ENCODE measurements at regions of chr1 and their contacts with region 1.

Region 1: GRCh38 chr1:93447516-93448291 is at the start of gene FNBP1L:
- DNase-seq: peak; percentile 90 to 92 (median 92)
- ATAC-seq: peak; percentile 96
- H3K4me3 ChIP-seq: peak within 1 kb of the TSS; percentile 89
- H3K27ac ChIP-seq: peak within 1 kb of the TSS; percentile 77
- H3K4me1 ChIP-seq: peaks cover 14 to 18% of the 10 kb centered on the region in 2 experiments; a peak in 4 of 5 replicates
- H3K27me3 ChIP-seq: 0 out of 5 replicates have a peak, but pooled peaks cover 0 to 4% of the 10 kb centered on the region in 2 experiments
- CTCF ChIP-seq: no peak
- EP300 ChIP-seq: no peak
- POLR2A ChIP-seq: peak; percentile 65
- RAD21 ChIP-seq: no peak
- polyA plus RNA-seq, gene FNBP1L: 1.4 to 2.3 TPM

Region 2: DNA sequence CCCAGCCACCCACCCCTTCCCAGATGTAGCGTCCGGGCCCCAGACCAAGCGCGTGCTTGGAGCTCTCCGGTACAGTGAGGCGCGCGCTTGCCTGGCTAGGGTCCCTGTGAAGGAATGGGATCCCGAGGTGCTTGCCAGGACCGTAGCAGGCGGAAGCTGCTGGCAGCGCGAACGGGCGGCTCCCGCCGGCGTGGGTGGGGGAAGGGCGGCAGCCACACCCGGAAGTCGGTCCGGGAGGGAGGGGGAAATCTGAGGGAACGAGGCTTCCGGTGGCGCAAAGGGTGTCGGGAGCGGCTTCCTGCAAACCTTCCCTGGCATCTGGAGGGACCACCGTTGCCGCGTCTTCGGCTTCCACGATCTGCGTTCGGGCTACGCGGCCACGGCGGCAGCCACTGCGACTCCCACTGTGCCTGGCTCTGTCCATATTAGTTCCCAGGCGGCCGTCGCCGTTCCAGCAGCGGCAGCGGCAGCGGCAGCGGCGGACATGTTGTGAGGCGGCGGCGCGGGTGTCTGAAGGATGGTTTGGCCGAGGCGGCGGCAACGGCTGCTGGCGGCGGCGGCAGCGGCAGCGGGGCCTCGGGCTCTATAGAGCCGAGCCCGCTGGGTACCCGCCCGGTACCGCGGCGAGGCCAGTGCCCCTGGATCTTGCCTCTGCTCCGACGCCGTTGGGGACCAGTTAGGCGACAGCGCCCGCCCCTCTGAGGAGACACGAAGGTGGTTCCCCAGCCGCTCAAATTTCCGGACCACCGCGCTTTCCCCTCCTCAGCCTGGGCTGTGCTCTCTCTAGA is 101.9 kb before region 1 on chr1 and contains the start of gene DR1:
- CTCF ChIA-PET with region 1: no interaction called
- POLR2A ChIA-PET with region 1: no interaction called
- in situ Hi-C with region 1: no loop called
- intact Hi-C with region 1: no loop called
- DNase-seq: peak; percentile 91 to 94 (median 94)
- ATAC-seq: peak; percentile 70
- H3K4me3 ChIP-seq: peak within 1 kb of the TSS; percentile 91
- H3K27ac ChIP-seq: peak within 1 kb of the TSS; percentile 99
- H3K4me1 ChIP-seq: peaks cover 0 to 4% of the 10 kb centered on the region in 2 experiments; a peak in 3 of 5 replicates
- H3K27me3 ChIP-seq: no peaks in the 10 kb centered on the region
- CTCF ChIP-seq: no peak
- EP300 ChIP-seq: peak; percentile 62
- POLR2A ChIP-seq: peak; percentile 98
- RAD21 ChIP-seq: no peak
- polyA plus RNA-seq, gene DR1: 8.1 to 9.3 TPM

Region 3: DNA sequence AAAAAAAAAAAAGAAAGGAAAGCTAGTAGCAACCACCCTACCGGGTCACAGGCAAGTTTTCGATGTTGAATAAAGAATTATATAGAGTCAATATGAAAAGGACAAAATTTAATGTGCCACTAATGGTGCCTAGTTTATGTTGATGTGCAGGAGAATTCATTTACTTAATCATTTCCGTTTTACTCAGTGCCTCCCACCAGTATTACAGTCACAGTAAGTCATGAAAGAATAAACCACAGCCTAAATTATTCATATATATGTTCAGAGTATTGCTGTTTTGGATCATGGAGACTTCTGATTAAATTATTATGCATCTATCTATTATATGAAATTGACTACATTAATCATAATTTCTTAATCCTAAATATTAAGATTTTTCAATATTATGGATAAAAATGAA is 35.5 kb after region 1 on chr1:
- CTCF ChIA-PET with region 1: no interaction called
- POLR2A ChIA-PET with region 1: no interaction called
- in situ Hi-C with region 1: no loop called
- intact Hi-C with region 1: no loop called
- DNase-seq: no peak
- ATAC-seq: no peak
- H3K4me3 ChIP-seq: no peak overlapping the region
- H3K27ac ChIP-seq: no peak overlapping the region
- H3K4me1 ChIP-seq: no peaks in the 10 kb centered on the region
- H3K27me3 ChIP-seq: no peaks in the 10 kb centered on the region
- CTCF ChIP-seq: no peak
- EP300 ChIP-seq: no peak
- POLR2A ChIP-seq: no peak
- RAD21 ChIP-seq: no peak

Region 4: GRCh38 chr1:93502561-93502960 is 54.9 kb after region 1 on chr1:
- CTCF ChIA-PET with region 1: no interaction called
- POLR2A ChIA-PET with region 1: interaction called, 3 read pairs
- in situ Hi-C with region 1: no loop called
- intact Hi-C with region 1: loop called (anchors 5 kb)
- DNase-seq: no peak
- ATAC-seq: no peak
- H3K4me3 ChIP-seq: no peak overlapping the region
- H3K27ac ChIP-seq: peak overlapping the region; percentile 47
- H3K4me1 ChIP-seq: peaks cover 4 to 54% of the 10 kb centered on the region in 2 experiments; a peak in 4 of 5 replicates
- H3K27me3 ChIP-seq: no peaks in the 10 kb centered on the region
- CTCF ChIP-seq: no peak
- EP300 ChIP-seq: no peak
- POLR2A ChIP-seq: no peak
- RAD21 ChIP-seq: no peak

Region 5: GRCh38 chr1:93615582-93616150 is 168.0 kb after region 1 on chr1:
- CTCF ChIA-PET with region 1: no interaction called
- POLR2A ChIA-PET with region 1: no interaction called
- in situ Hi-C with region 1: loop called (anchors 5 kb)
- intact Hi-C with region 1: no loop called
- DNase-seq: peak; percentile 44 to 54 (median 50)
- ATAC-seq: peak; percentile 59
- H3K4me3 ChIP-seq: no peak overlapping the region
- H3K27ac ChIP-seq: no peak overlapping the region
- H3K4me1 ChIP-seq: peaks cover 0 to 6% of the 10 kb centered on the region in 2 experiments; a peak in 3 of 5 replicates
- H3K27me3 ChIP-seq: 0 out of 5 replicates have a peak, but pooled peaks cover 0 to 3% of the 10 kb centered on the region in 2 experiments
- CTCF ChIP-seq: no peak
- EP300 ChIP-seq: no peak
- POLR2A ChIP-seq: no peak
- RAD21 ChIP-seq: no peak